ENCODE measurements at regions of chr18 and their contacts with region 1.

Region 1: DNA sequence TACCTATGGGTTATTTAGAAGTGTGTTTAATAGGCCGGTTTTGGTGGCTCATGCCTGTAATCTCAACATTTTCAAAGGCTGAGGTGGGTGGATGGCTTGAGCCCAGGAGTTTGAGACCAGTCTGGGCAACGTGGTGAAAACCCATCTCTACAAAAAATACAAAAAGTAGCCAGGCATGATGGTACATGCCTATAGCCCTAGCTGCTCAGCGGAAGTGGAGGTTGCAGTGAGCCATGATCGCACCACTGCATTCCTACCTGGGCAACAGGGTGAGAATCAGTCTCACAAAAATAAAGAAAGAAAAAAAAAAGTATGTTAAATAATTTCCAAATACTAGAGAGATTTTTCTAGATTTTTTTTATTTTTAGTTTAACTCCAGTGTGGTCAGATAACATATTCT is 316.0 kb downstream of the KIAA1328 start:
- DNase-seq: no peak
- H3K4me3 ChIP-seq: no peak overlapping the region
- H3K27ac ChIP-seq: no peak overlapping the region
- H3K4me1 ChIP-seq: no peaks in the 10 kb centered on the region
- H3K27me3 ChIP-seq: no peaks in the 10 kb centered on the region
- CTCF ChIP-seq: no peak

Region 2: GRCh38 chr18:37282386-37283037 is 137.6 kb after region 1 on chr18:
- intact Hi-C with region 1: no loop called
- DNase-seq: no peak
- H3K4me3 ChIP-seq: no peak overlapping the region
- H3K27ac ChIP-seq: no peak overlapping the region
- H3K4me1 ChIP-seq: no peaks in the 10 kb centered on the region
- H3K27me3 ChIP-seq: peaks cover 0 to 58% of the 10 kb centered on the region in 2 donors
- CTCF ChIP-seq: peak in 1 of 2 experiments; percentile 11

Region 3: DNA sequence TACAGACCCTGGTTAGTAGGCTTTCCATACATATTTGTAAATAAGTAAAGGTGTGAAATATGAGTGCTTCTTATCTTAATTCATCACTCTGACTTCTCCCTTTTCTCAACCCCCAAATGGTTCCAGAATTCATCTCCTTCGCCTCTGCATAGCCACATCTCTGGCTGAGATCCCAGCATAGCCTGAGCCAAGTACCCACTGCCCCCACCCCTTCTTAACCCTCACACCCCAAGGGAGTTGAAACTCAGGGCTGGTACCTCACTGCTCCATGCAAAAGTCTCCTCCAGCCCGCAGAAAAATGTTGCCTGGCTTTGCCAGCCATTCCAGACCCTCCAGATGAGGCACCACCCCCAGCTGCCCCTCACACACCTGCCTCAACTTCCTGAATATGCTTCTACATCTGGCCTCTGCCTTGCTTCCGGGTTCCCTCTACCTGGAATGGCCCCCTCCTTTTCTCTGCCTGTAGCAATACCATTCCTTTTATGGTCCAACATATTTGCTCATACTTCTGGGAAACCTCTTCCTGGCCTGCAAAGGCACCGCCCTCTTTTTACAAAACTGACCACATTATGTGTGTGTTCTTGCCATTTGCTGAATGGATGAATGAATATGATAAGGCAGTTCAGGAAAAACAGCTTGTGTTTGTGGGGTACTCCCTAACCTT is 307.9 kb after region 1 on chr18:
- intact Hi-C with region 1: no loop called
- DNase-seq: no peak
- H3K4me3 ChIP-seq: no peak overlapping the region
- H3K27ac ChIP-seq: no peak overlapping the region
- H3K4me1 ChIP-seq: peaks cover 0 to 20% (median 14%) of the 10 kb centered on the region in 4 donors
- H3K27me3 ChIP-seq: peaks cover 0 to 4% of the 10 kb centered on the region in 2 donors
- CTCF ChIP-seq: no peak

Region 4: GRCh38 chr18:37762076-37762621 is 617.2 kb after region 1 on chr18:
- intact Hi-C with region 1: loop called (anchors 5 kb)
- DNase-seq: no peak
- H3K4me3 ChIP-seq: no peak overlapping the region
- H3K27ac ChIP-seq: no peak overlapping the region
- H3K4me1 ChIP-seq: no peaks in the 10 kb centered on the region
- H3K27me3 ChIP-seq: no peaks in the 10 kb centered on the region
- CTCF ChIP-seq: no peak

Measured in tibial artery (tissue), 4 donors.